ENCODE measurements at regions of chr17 and their contacts with region 1.

Region 1: GRCh38 chr17:67717624-67718329 is at the start of gene NOL11:
- DNase-seq: peak; percentile 97 to 100
- ATAC-seq: peak; percentile 99
- H3K4me3 ChIP-seq: peak within 1 kb of the TSS; percentile 73
- H3K27ac ChIP-seq: peak within 1 kb of the TSS; percentile 89 to 93
- H3K4me1 ChIP-seq: peaks cover 17% of the 10 kb centered on the region
- CTCF ChIP-seq: peak; percentile 89
- EP300 ChIP-seq: no peak
- POLR2A ChIP-seq: peak; percentile 91
- RAD21 ChIP-seq: peak; percentile 50 to 69
- polyA plus RNA-seq, gene NOL11: 105 and 118 TPM in 2 replicates

Region 2: GRCh38 chr17:67647482-67647881 is 70.3 kb before region 1 on chr17:
- CTCF ChIA-PET with region 1: no interaction called
- POLR2A ChIA-PET with region 1: no interaction called
- DNase-seq: no peak
- ATAC-seq: no peak
- H3K4me3 ChIP-seq: no peak overlapping the region
- H3K27ac ChIP-seq: no peak overlapping the region
- H3K4me1 ChIP-seq: no peaks in the 10 kb centered on the region
- CTCF ChIP-seq: no peak
- EP300 ChIP-seq: no peak
- POLR2A ChIP-seq: no peak
- RAD21 ChIP-seq: no peak

Region 3: GRCh38 chr17:67663460-67663859 is 54.3 kb before region 1 on chr17:
- CTCF ChIA-PET with region 1: no interaction called
- POLR2A ChIA-PET with region 1: no interaction called
- DNase-seq: peak in 1 of 2 experiments; percentile 8
- ATAC-seq: no peak
- H3K4me3 ChIP-seq: no peak overlapping the region
- H3K27ac ChIP-seq: no peak overlapping the region
- H3K4me1 ChIP-seq: no peaks in the 10 kb centered on the region
- CTCF ChIP-seq: no peak
- EP300 ChIP-seq: no peak
- POLR2A ChIP-seq: no peak
- RAD21 ChIP-seq: peak in 1 of 2 experiments; percentile 19; a peak in 2 of 5 replicates

Region 4: DNA sequence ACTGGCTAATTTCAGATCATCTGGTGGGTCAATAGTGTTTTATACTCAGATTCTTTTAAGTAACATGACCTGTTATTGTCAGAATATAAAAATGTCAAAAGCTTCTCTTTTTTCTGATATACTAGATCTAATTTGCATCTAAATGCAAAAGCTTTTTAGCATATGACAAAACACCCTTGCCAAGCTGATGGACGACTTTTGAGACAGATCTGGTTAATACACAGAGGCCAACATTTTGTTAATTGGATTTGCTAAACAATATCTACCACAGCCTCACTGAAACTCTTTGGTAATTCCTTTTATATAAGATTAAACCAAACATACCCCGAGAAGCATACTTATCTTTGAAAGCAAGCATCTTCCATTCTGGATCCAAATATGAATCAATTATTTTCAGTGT is 10.3 kb before region 1 on chr17:
- CTCF ChIA-PET with region 1: interaction called, 37 read pairs
- POLR2A ChIA-PET with region 1: interaction called, 8 read pairs
- DNase-seq: no peak
- ATAC-seq: no peak
- H3K4me3 ChIP-seq: no peak overlapping the region
- H3K27ac ChIP-seq: no peak overlapping the region
- H3K4me1 ChIP-seq: no peaks in the 10 kb centered on the region
- CTCF ChIP-seq: no peak
- EP300 ChIP-seq: no peak
- POLR2A ChIP-seq: no peak
- RAD21 ChIP-seq: no peak

Region 5: DNA sequence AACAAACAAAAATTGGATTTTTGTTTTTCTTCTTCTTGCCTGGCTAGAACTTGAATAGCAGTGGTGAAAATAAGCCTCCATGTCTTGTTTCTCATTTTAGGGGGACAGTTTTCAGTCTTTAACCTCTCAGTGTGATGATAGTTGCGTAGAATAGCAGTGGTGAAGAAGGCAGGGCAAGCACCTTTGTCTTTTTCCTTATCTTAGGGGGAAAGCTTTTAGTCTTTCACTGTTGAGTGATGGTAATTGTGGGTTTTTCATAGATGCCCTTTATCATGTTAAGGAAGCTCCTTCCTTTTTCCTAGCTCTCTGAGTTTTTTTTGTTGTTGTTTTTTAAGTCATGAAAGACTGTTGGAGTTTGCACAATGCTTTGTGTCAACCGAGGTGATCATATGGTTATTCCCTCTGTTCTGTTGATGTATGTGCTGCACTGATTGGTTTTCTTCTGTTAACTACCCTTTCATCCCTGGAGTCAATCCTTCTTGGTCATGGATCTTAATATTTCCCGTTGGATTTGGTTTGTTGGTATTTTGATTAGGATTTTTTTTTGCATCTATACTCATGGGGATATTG is 15.7 kb after region 1 on chr17:
- CTCF ChIA-PET with region 1: interaction called, 22 read pairs
- POLR2A ChIA-PET with region 1: interaction called, 4 read pairs
- DNase-seq: no peak
- ATAC-seq: no peak
- H3K4me3 ChIP-seq: no peak overlapping the region
- H3K27ac ChIP-seq: no peak overlapping the region
- H3K4me1 ChIP-seq: no peaks in the 10 kb centered on the region
- CTCF ChIP-seq: no peak
- EP300 ChIP-seq: no peak
- POLR2A ChIP-seq: no peak
- RAD21 ChIP-seq: no peak

Region 6: DNA sequence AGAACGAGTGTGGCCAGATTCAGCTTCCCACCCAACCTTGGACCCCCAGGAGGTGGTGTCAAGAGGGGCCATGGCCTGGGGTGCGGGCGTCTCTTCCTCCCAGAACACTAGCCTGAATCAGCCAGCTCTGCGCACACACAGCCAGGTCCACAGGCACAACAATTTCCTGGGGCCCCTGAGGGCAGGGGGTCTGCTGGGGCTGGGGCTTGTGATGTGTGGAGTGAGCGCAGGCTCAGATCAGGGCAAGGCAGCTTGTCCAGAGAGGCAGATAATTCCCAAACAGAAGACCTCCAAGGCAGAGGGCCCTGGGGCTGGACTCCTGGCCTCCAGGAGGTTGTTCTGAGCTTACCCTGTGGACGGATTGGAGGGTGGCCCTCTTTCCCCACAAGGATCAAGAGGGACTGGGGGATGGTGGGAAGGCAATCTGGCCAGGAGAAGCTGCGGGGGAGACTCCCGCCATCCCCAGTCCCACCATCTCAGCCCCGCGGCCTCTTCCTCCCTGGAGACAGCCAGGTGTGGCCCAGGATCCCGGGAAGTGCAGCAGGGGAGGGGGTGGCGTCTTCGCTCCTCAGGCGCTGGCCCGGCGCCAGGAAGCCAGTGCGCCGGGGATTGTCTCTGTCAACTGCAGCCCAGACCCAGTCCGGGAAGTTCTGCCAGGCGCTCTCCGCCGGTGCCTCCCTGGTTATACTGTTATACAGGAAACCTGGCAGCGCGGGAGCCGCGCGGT is 478.1 kb after region 1 on chr17:
- CTCF ChIA-PET with region 1: no interaction called
- POLR2A ChIA-PET with region 1: no interaction called
- DNase-seq: no peak
- ATAC-seq: no peak
- H3K4me3 ChIP-seq: peak overlapping the region; percentile 43
- H3K27ac ChIP-seq: 0 out of 6 replicates have a peak overlapping the region, but pooled peaks of 1 of the 2 experiments have one; percentile 22
- H3K4me1 ChIP-seq: peaks cover 44% of the 10 kb centered on the region
- CTCF ChIP-seq: no peak
- EP300 ChIP-seq: no peak
- POLR2A ChIP-seq: no peak
- RAD21 ChIP-seq: no peak

Region 7: DNA sequence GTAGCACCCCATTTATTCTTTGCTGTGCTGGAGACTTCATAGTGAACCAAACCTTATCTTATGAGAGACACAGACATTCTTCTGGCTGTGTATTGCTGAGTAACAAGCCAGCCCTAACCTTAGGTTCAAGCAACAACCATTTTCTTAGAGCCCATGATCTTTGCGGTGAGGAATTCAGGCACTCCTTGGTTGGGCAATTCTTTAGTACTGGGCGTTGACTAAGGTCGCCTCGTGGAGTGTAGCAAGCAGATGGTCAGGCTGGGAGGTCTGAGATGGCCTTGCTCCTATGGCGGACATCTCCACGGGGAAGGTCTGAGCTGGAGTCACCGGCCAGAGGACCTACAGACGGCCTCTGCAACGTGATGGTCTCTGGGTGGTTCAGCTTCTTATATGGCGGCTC is 616.6 kb after region 1 on chr17:
- CTCF ChIA-PET with region 1: no interaction called
- POLR2A ChIA-PET with region 1: no interaction called
- DNase-seq: no peak
- ATAC-seq: 0 out of 6 replicates have a peak, but pooled peaks of 1 of the 2 experiments have one; percentile 31
- H3K4me3 ChIP-seq: no peak overlapping the region
- H3K27ac ChIP-seq: no peak overlapping the region
- H3K4me1 ChIP-seq: no peaks in the 10 kb centered on the region
- CTCF ChIP-seq: no peak
- EP300 ChIP-seq: no peak
- POLR2A ChIP-seq: no peak
- RAD21 ChIP-seq: no peak

Measured in A549 (cell line).